ENCODE measurements at regions of chr15 and their contacts with region 1.

Region 1: GRCh38 chr15:81256916-81257315 is 60.2 kb downstream of the IL16 start:
- DNase-seq: peak in 2 of 4 donors; percentile 23 to 46
- ATAC-seq: peak; percentile 58
- H3K4me3 ChIP-seq: no peak overlapping the region
- H3K27ac ChIP-seq: no peak overlapping the region
- H3K4me1 ChIP-seq: peaks cover 0 to 8% of the 10 kb centered on the region in 2 donors
- H3K27me3 ChIP-seq: no peaks in the 10 kb centered on the region
- CTCF ChIP-seq: peak in 1 of 2 donors; percentile 31

Region 2: GRCh38 chr15:81155375-81156218 is 101.3 kb before region 1 on chr15:
- intact Hi-C with region 1: loop called in 1 of 2 experiments (anchors 5 kb)
- DNase-seq: peak in 2 of 4 donors; percentile 41 to 71
- ATAC-seq: peak; percentile 59
- H3K4me3 ChIP-seq: no peak overlapping the region
- H3K27ac ChIP-seq: no peak overlapping the region
- H3K4me1 ChIP-seq: peaks cover under 1 to 6% of the 10 kb centered on the region in 2 donors
- H3K27me3 ChIP-seq: no peaks in the 10 kb centered on the region
- CTCF ChIP-seq: peak; percentile 36 to 53

Measured in left lung (tissue), 14 donors.